ENCODE measurements at regions of chr21 and their contacts with region 1.

Region 1: GRCh38 chr21:42117229-42117966 is 46.3 kb downstream of the UMODL1 start:
- DNase-seq: peak; percentile 37
- ATAC-seq: peak; percentile 88
- H3K4me3 ChIP-seq: peak overlapping the region; percentile 38; the same call in 1 of the 2 replicates
- H3K27ac ChIP-seq: 0 out of 2 replicates have a peak overlapping the region, but pooled peaks have one; percentile 3
- H3K4me1 ChIP-seq: peaks cover 37% of the 10 kb centered on the region
- H3K27me3 ChIP-seq: peaks cover 0 to under 1% of the 10 kb centered on the region in 2 experiments; a peak in 2 of 4 replicates
- CTCF ChIP-seq: peak; percentile 90 to 93 (median 91)
- EP300 ChIP-seq: no peak
- POLR2A ChIP-seq: no peak
- RAD21 ChIP-seq: peak; percentile 88

Region 2: DNA sequence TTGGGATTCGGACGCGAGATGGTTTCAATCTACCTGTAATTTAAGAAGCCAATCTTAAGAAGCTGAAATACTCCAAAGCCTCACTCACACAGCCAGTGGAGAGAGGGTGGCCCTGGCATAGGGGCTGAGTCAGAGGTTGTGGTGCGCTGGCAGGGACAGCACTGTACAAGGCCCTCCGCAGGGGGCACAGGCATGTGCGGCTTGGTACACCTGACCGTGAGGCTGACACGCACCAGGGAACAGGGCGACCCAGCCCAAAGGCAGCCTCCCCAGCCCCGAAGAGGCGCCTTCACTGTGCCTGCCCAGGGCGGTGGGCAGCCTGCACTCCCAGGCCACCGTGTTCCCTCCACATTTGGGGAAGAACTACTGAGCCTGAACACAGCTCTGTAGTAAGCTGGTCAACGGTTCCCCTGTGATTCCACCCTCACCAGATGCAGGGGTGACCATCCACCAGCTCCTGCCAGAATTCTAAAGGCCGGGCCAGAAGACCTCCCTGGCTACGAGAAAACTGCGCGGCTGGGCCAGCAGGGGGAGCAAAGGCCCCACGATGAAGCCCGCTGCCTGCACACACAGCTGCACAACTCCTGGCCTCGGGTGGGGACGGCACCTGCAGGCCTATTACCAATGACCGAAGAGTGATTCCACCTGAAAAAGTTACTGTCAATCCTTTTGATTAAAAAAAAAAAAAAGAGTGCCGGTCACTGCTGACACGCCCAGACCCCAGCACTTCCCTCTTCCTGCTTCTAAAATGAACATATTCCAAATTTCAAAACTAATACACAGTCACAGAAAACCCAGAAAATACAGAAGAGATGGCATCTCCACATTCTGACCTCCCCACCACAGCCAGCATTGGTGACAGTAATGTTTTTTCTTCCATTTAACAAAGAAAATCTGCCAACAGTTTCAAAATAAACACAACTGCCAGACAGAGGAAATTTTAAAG is 300.9 kb before region 1 on chr21:
- CTCF ChIA-PET with region 1: interaction called, 48 read pairs
- POLR2A ChIA-PET with region 1: no interaction called
- RAD21 ChIA-PET with region 1: interaction called, 43 read pairs
- SMC1A ChIA-PET with region 1: interaction called, 46 read pairs
- in situ Hi-C with region 1: loop called (anchors 5 kb)
- intact Hi-C with region 1: loop called (anchors 1 kb)
- DNase-seq: no peak
- ATAC-seq: peak; percentile 99
- H3K4me3 ChIP-seq: no peak overlapping the region
- H3K27ac ChIP-seq: no peak overlapping the region
- H3K4me1 ChIP-seq: peaks cover 5% of the 10 kb centered on the region; the same call in 1 of the 2 replicates
- H3K27me3 ChIP-seq: no peaks in the 10 kb centered on the region
- CTCF ChIP-seq: peak; percentile 84 to 93 (median 87)
- EP300 ChIP-seq: no peak
- POLR2A ChIP-seq: no peak
- RAD21 ChIP-seq: peak; percentile 88

Region 3: GRCh38 chr21:41879190-41879998 is 238.0 kb before region 1 on chr21 and contains the start of gene PRDM15:
- CTCF ChIA-PET with region 1: interaction called, 31 read pairs
- POLR2A ChIA-PET with region 1: interaction called, 3 read pairs
- RAD21 ChIA-PET with region 1: interaction called, 39 read pairs
- SMC1A ChIA-PET with region 1: interaction called, 19 read pairs
- in situ Hi-C with region 1: no loop called
- intact Hi-C with region 1: loop called (anchors 1 kb)
- DNase-seq: no peak
- ATAC-seq: peak; percentile 68
- H3K4me3 ChIP-seq: peak within 1 kb of the TSS; percentile 94
- H3K27ac ChIP-seq: peak within 1 kb of the TSS; percentile 86
- H3K4me1 ChIP-seq: peaks cover 13% of the 10 kb centered on the region
- H3K27me3 ChIP-seq: no peaks in the 10 kb centered on the region
- CTCF ChIP-seq: no peak
- EP300 ChIP-seq: no peak
- POLR2A ChIP-seq: peak; percentile 82
- RAD21 ChIP-seq: no peak
- polyA plus RNA-seq, gene PRDM15: 2.2 to 2.8 TPM

Region 4: GRCh38 chr21:41913231-41913630 is 204.2 kb before region 1 on chr21:
- CTCF ChIA-PET with region 1: interaction called, 10 read pairs
- POLR2A ChIA-PET with region 1: no interaction called
- RAD21 ChIA-PET with region 1: no interaction called
- SMC1A ChIA-PET with region 1: interaction called, 6 read pairs
- in situ Hi-C with region 1: no loop called
- intact Hi-C with region 1: no loop called
- DNase-seq: no peak
- ATAC-seq: no peak
- H3K4me3 ChIP-seq: no peak overlapping the region
- H3K27ac ChIP-seq: no peak overlapping the region
- H3K4me1 ChIP-seq: no peaks in the 10 kb centered on the region
- H3K27me3 ChIP-seq: no peaks in the 10 kb centered on the region
- CTCF ChIP-seq: no peak
- EP300 ChIP-seq: no peak
- POLR2A ChIP-seq: no peak
- RAD21 ChIP-seq: no peak

Region 5: DNA sequence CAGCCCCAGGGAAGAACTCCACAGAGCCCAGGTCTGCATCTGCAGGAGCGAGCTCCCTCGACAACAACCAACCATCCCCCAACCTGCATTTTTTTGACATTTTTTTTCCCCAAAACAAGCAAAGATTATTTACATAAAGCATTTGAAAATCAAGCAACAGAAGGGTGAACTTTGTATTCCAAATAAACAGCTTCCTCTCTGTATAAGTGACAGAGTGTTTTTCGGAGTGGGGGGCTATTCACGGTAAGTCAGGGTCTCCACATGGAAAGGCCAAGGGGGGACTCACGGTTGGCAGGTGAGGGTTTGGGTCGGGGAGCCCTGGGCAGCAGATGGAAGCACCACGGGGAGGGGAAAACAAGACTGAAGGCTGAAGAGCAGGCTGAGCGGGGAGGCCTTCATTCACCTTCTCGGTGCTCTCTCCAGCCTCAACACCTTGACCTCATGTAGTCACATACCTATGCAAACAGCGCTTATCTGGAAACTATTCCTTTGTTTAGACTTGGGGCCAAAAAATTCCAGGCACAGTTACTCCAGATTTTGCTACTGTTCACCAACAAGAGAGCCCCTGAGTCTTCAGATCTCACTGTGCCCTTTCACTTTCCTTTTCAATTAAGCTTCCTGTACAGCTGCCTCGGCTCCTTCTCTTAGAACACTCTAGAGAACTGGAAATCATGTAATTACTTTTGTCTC is 191.1 kb before region 1 on chr21:
- CTCF ChIA-PET with region 1: interaction called, 10 read pairs
- POLR2A ChIA-PET with region 1: no interaction called
- RAD21 ChIA-PET with region 1: interaction called, 11 read pairs
- SMC1A ChIA-PET with region 1: interaction called, 6 read pairs
- in situ Hi-C with region 1: no loop called
- intact Hi-C with region 1: loop called (anchors 10 kb)
- DNase-seq: peak; percentile 68
- ATAC-seq: peak; percentile 70
- H3K4me3 ChIP-seq: peak overlapping the region; percentile 81
- H3K27ac ChIP-seq: peak overlapping the region; percentile 99
- H3K4me1 ChIP-seq: peaks cover 68% of the 10 kb centered on the region
- H3K27me3 ChIP-seq: no peaks in the 10 kb centered on the region
- CTCF ChIP-seq: no peak
- EP300 ChIP-seq: no peak
- POLR2A ChIP-seq: peak; percentile 45; the same call in 1 of the 2 replicates
- RAD21 ChIP-seq: no peak

Region 6: GRCh38 chr21:42080788-42081083 is 36.7 kb before region 1 on chr21:
- CTCF ChIA-PET with region 1: interaction called, 6 read pairs
- POLR2A ChIA-PET with region 1: no interaction called
- RAD21 ChIA-PET with region 1: interaction called, 10 read pairs
- SMC1A ChIA-PET with region 1: interaction called, 6 read pairs
- in situ Hi-C with region 1: no loop called
- intact Hi-C with region 1: no loop called
- DNase-seq: no peak
- ATAC-seq: no peak
- H3K4me3 ChIP-seq: no peak overlapping the region
- H3K27ac ChIP-seq: no peak overlapping the region
- H3K4me1 ChIP-seq: peaks cover 27% of the 10 kb centered on the region
- H3K27me3 ChIP-seq: no peaks in the 10 kb centered on the region
- CTCF ChIP-seq: no peak
- EP300 ChIP-seq: no peak
- POLR2A ChIP-seq: no peak
- RAD21 ChIP-seq: no peak